Activated naive CD4-positive, alpha-beta T cell treated with anti-CD3 and anti-CD28 coated beads for 36 hours (primary cell): ENCODE measurements at regions of chr3 and their contacts with region 1.

Region 1: DNA sequence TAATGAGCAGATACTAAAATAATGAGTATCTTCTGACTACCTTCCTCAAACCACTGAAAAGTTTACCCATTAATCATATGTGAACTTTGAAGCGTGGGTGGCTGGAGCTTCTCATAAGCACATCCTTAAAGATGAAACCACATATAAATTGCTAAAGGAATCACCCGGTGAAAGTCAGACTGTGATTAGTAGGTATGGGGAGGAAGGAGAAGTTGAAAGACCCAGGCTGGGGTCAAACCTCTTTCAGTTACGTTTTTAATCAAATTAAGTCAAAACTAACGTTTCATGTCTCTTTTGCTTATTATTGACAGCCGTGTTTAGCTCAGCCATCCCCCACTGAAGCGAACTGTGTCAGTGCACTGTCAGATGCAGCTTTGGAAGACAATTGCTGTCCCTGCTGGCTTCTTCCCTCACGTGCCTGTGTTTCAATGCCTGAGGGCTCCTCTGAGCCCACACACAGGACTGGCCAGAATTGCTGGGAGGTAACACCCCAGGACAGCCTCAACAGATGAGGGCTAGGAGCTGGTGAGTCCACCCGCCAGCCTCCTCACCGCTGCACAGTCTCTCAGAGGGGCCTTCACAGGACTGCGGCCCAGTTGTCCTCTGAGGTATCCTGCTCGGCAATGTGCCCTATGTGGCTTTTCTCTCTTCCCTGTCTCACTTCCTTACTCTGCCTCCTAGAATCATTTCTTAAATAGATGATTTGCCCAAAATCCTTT is 29.3 kb upstream of the SH3BP5 start:
- DNase-seq: peak; percentile 86
- H3K4me3 Mint-ChIP-seq: no peak overlapping the region
- H3K27ac Mint-ChIP-seq: peak overlapping the region; percentile 83
- H3K4me1 Mint-ChIP-seq: peaks cover 42% of the 10 kb centered on the region
- H3K27me3 Mint-ChIP-seq: peaks cover 2% of the 10 kb centered on the region

Region 2: GRCh38 chr3:15291589-15292541 is 69.8 kb before region 1 on chr3:
- CTCF ChIA-PET with region 1: interaction called, 4 read pairs
- intact Hi-C with region 1: loop called (anchors 1 kb)
- DNase-seq: peak; percentile 84
- H3K4me3 Mint-ChIP-seq: peak overlapping the region; percentile 0
- H3K27ac Mint-ChIP-seq: peak overlapping the region; percentile 76
- H3K4me1 Mint-ChIP-seq: peaks cover 72% of the 10 kb centered on the region
- H3K27me3 Mint-ChIP-seq: no peaks in the 10 kb centered on the region

Region 3: GRCh38 chr3:15309662-15310335 is 51.9 kb before region 1 on chr3:
- CTCF ChIA-PET with region 1: interaction called, 14 read pairs
- intact Hi-C with region 1: loop called (anchors 1 kb)
- DNase-seq: peak; percentile 76
- H3K4me3 Mint-ChIP-seq: no peak overlapping the region
- H3K27ac Mint-ChIP-seq: peak overlapping the region; percentile 95
- H3K4me1 Mint-ChIP-seq: peaks cover 66% of the 10 kb centered on the region
- H3K27me3 Mint-ChIP-seq: no peaks in the 10 kb centered on the region

Region 4: DNA sequence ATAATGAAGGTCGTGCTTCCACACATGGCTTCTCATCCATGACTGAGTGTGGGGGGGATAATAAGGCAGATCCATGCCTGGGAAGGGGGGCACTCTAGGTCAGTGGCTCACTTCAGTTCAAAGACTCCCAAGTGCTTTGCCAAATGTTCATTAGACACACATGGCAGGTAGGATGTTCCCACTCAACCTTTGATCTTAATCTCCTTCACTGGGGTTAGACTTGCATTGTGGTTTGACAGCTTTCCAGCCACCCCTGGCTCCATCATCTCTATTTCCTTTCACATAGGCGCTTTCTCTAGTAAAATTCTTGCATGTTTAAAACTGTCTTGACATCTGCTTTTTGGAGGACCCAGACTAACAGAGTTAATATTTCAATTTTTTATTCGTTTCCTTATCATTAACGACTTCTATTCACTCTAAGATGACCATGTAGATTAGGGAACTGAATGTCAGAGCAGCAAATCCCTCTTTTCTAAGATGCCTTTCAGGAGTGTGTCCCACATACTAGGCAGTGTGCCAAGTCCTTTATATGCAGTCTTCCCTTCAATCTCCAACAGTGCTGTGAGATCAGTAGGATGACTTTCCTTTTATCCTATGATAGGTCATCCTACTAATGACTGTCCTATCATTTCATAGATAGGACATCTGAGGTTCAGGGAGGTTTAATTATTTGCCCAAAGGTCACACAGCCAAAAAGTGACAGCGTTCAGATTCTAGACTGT is 297.8 kb after region 1 on chr3:
- CTCF ChIA-PET with region 1: no interaction called
- intact Hi-C with region 1: no loop called
- DNase-seq: no peak
- H3K4me3 Mint-ChIP-seq: no peak overlapping the region
- H3K27ac Mint-ChIP-seq: no peak overlapping the region
- H3K4me1 Mint-ChIP-seq: peaks cover 5% of the 10 kb centered on the region
- H3K27me3 Mint-ChIP-seq: no peaks in the 10 kb centered on the region